Caco-2 (cell line): ENCODE measurements at regions of chr9 and their contacts with region 1.

Region 1: GRCh38 chr9:130235897-130236668 is 29.5 kb upstream of the HMCN2 start:
- DNase-seq: peak; percentile 53 to 73
- H3K4me3 ChIP-seq: no peak overlapping the region
- H3K4me3 Mint-ChIP-seq: no peak overlapping the region
- H3K27ac Mint-ChIP-seq: no peak overlapping the region
- H3K4me1 ChIP-seq: no peaks in the 10 kb centered on the region; the same call in 1 of the 2 replicates
- H3K4me1 Mint-ChIP-seq: no peaks in the 10 kb centered on the region
- H3K27me3 ChIP-seq: no peaks in the 10 kb centered on the region
- H3K27me3 Mint-ChIP-seq: no peaks in the 10 kb centered on the region
- CTCF ChIP-seq: peak; percentile 98 to 99

Region 2: GRCh38 chr9:130172858-130173665 is 63.0 kb before region 1 on chr9:
- CTCF ChIA-PET with region 1: interaction called, 6 read pairs
- POLR2A ChIA-PET with region 1: interaction called, 3 read pairs
- intact Hi-C with region 1: loop called (anchors 1 kb)
- DNase-seq: peak in 1 of 2 experiments; percentile 44
- H3K4me3 ChIP-seq: peak overlapping the region; percentile 54
- H3K4me3 Mint-ChIP-seq: peak overlapping the region; percentile 75
- H3K27ac Mint-ChIP-seq: no peak overlapping the region
- H3K4me1 ChIP-seq: no peaks in the 10 kb centered on the region
- H3K4me1 Mint-ChIP-seq: no peaks in the 10 kb centered on the region
- H3K27me3 ChIP-seq: no peaks in the 10 kb centered on the region
- H3K27me3 Mint-ChIP-seq: peaks cover 3% of the 10 kb centered on the region
- CTCF ChIP-seq: peak in 1 of 2 experiments; percentile 5

Region 3: DNA sequence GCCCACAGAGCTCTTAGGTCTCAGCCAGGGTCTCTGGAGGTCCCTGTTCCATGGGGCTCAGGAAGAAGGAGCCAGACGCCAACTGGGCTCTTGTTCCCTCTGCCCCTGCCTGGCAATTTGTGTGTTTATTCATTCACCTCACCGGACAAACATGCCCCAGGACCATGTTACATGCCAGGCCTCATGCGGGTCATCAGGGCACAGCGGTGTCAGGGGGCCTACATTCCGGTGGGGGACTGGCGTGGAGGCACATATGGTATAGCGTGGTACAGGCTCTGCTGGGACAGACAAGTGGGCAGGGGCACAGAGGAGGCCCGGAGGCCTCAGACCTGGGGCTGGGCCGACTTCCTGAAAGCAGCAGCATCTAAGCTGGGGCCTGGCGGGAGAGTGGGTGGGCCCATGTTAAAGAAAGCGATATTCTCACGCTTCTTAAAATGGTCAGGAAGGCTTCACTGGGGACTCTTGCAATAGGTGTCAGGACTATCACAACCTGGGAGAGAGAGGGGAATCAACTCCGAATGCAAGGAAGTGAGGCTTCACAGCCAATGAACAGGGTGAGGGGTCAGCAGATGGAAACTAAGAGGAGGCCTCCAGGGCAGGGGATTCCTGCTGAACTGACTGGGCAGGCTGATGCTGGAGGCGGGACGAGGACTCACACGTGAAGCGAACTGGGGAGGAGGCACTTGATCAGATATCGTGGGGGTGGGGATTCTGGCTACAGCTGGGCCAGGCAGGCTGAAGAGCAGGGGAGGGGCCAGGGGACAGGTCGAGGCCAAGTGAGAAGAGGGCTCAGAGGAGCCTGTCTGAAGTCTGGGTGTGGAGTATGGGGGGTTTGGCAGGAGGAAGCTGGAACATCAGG is 22.0 kb before region 1 on chr9:
- CTCF ChIA-PET with region 1: no interaction called
- POLR2A ChIA-PET with region 1: no interaction called
- intact Hi-C with region 1: no loop called
- DNase-seq: peak; percentile 36 to 72
- H3K4me3 ChIP-seq: no peak overlapping the region
- H3K4me3 Mint-ChIP-seq: no peak overlapping the region
- H3K27ac Mint-ChIP-seq: no peak overlapping the region
- H3K4me1 ChIP-seq: no peaks in the 10 kb centered on the region; the same call in 1 of the 2 replicates
- H3K4me1 Mint-ChIP-seq: no peaks in the 10 kb centered on the region
- H3K27me3 ChIP-seq: no peaks in the 10 kb centered on the region
- H3K27me3 Mint-ChIP-seq: no peaks in the 10 kb centered on the region
- CTCF ChIP-seq: no peak